ENCODE measurements at regions of chr2 and their contacts with region 1.

Region 1: GRCh38 chr2:66574701-66575624 is 140.0 kb downstream of the MEIS1 start:
- DNase-seq: peak; percentile 37 to 56
- ATAC-seq: peak; percentile 39

Region 2: DNA sequence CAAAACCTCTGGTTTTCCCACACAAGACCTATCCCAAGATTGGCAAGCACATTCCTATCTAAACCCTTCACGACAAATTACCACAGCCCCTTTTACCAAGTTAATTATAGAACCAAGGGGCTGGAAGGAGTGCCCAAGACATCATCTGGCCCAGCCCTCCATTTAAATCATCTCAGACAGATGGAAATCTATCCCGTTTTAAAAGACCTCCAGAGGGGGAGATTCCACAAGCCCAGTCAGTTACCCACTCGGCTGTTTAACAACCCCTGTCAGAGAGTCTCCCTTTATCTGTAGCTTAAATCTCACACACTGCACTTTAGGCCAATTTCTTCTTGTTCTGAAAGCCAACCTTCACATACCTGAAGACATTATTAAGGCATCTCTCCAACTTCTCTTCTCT is 319.1 kb before region 1 on chr2:
- intact Hi-C with region 1: no loop called
- DNase-seq: no peak
- ATAC-seq: no peak

Region 3: GRCh38 chr2:66665124-66665984 is 90.4 kb after region 1 on chr2:
- intact Hi-C with region 1: no loop called
- DNase-seq: no peak
- ATAC-seq: no peak

Region 4: DNA sequence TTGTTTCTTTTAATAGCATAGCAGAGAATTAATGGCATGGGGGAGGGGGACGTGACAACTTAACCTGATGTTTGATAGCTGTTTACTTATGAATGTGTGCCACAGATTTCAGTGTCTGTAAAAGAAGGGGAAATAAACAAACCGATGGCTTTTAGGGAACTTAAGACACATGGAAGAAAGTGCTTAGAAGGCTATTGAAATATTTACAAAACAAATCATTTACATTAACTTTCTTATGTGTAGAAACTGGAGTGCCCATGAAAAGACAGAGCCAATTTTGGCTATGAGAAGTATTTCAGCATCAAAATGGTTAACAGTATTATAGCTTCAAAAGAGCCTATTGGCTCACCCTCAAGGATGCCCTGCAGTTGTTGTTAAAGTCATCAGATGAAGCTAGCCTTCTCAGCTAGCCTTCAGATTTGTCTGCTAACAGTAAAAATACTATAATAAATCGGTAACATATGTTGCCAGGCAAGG is 116.1 kb after region 1 on chr2:
- intact Hi-C with region 1: loop called in 1 of 2 experiments (anchors 5 kb)
- DNase-seq: no peak
- ATAC-seq: no peak

Measured in left colon (tissue), 2 donors.